Heart left ventricle (tissue), 16 donors: ENCODE measurements at regions of chr5 and their contacts with region 1.

Region 1: GRCh38 chr5:13581914-13582313 is 362.6 kb downstream of the DNAH5 start:
- DNase-seq: no peak
- ATAC-seq: no peak
- H3K4me3 ChIP-seq: no peak overlapping the region
- H3K27ac ChIP-seq: no peak overlapping the region
- H3K4me1 ChIP-seq: no peaks in the 10 kb centered on the region
- H3K27me3 ChIP-seq: no peaks in the 10 kb centered on the region
- CTCF ChIP-seq: no peak
- POLR2A ChIP-seq: no peak

Region 2: DNA sequence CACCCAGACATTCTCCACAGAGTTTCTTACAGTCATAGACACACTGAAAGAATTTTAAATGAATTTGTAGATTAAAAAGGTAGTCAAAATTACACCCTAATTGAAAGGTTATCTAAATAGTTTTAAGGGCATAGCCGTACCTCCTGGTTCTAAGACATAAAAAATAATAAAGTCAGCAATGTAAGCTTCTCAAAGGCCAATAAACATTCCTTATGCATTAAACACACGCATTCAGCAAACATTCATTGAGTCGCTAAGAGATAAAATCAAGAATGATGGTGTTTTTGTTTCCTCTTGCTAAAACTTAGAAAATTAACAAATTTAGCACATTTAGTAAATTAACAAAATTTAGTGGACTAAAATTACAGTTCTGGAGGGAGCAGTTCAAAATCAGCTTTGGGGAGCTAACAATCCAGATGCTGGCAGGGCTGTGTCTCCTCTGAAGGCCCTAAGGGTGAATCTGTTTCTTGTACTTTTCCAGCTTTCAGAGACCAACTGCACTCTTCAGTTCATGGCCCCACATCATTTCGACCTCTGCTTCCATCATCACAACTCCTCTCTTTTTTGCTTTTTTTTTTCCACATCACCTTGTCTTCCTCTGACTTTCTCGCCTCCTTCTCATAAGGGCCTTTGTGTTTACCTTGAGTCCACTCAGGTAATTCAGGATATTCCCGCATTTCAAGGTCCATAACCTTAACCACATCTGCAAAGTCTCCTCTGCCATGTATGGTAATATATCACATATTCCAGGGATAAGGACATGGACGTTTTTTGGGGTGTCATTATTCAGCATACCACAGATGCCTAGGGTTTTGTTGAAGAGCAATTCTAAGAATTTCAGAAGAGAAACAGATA is 153.8 kb before region 1 on chr5:
- intact Hi-C with region 1: no loop called
- DNase-seq: no peak
- ATAC-seq: no peak
- H3K4me3 ChIP-seq: no peak overlapping the region
- H3K27ac ChIP-seq: no peak overlapping the region
- H3K4me1 ChIP-seq: no peaks in the 10 kb centered on the region
- H3K27me3 ChIP-seq: no peaks in the 10 kb centered on the region
- CTCF ChIP-seq: no peak
- POLR2A ChIP-seq: no peak

Region 3: GRCh38 chr5:13488254-13488931 is 93.5 kb before region 1 on chr5:
- intact Hi-C with region 1: no loop called
- DNase-seq: no peak
- ATAC-seq: no peak
- H3K4me3 ChIP-seq: no peak overlapping the region
- H3K27ac ChIP-seq: no peak overlapping the region
- H3K4me1 ChIP-seq: no peaks in the 10 kb centered on the region
- H3K27me3 ChIP-seq: no peaks in the 10 kb centered on the region
- CTCF ChIP-seq: no peak
- POLR2A ChIP-seq: no peak

Region 4: DNA sequence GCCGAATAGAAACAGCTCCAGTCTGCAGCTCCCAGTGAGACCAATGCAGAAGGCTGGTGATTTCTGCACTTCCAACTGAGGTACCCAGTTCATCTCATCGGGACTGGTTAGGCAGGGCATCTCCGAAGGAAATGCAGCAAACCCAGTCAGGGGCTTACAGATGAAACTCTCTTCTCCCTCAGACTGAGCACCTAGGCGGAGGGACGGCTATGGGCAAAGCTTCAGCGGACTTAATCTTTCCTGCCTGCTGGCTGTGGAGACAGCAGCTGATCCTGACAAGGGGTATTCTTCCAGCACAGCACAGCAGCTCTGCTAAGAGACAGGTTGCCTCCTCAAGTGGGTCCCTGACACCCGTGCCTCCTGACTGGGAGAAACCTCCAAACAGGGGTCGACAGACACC is 31.7 kb after region 1 on chr5:
- intact Hi-C with region 1: loop called in 1 of 10 experiments (anchors 2 kb)
- DNase-seq: no peak
- ATAC-seq: no peak
- H3K4me3 ChIP-seq: no peak overlapping the region
- H3K27ac ChIP-seq: no peak overlapping the region
- H3K4me1 ChIP-seq: no peaks in the 10 kb centered on the region
- H3K27me3 ChIP-seq: no peaks in the 10 kb centered on the region
- CTCF ChIP-seq: no peak
- POLR2A ChIP-seq: no peak